ENCODE measurements at regions of chr3 and their contacts with region 1.

Region 1: DNA sequence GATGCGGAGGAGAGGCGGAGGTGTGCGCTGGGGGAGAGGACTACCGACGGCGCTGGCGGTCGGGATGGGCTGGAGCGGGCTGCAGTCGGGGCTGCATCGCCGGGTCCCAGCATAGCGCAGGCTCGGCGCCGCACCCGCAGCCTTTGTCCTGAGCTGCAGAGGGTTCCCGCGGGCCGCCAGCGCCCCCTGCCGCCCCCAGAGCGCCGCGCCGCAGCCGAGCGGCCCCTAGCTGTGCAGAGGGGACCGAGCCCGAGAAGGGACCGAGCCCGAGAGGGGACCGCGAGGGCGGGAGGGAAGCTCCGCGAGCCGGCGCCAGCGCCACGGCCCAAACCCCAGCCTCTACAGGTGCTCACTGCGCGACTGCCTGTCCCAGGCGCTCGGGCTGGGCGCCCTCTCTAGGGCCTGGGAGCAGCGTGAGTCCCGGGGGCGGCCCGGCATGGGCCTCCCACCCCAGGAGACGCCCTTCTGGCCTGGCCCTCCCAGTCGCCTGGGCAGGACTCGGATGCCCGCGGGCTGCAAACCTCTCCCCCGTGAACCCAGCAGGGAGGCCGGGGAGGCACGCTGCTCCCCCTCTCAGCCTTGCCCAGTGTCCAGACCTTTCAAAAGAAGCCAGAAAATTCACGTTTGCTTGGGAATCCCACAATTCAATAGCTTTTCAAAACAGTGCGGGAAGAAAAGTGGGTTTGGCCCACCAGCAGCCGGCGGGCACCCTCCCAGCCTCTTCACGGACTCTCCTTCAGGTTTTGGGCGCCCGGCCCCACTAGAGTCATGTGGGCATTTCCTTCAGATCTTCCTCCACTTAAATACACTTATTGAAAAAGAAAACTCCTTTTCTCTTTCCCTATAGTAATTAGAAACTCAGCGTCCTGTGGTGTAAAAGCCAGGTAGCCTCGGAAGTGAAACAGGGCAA is 134.7 kb downstream of the TPRA1 start:
- H3K4me3 Mint-ChIP-seq: no peak overlapping the region
- H3K27ac Mint-ChIP-seq: no peak overlapping the region
- H3K4me1 Mint-ChIP-seq: peaks cover 18% of the 10 kb centered on the region
- H3K27me3 Mint-ChIP-seq: peaks cover 71% of the 10 kb centered on the region

Region 2: GRCh38 chr3:126752303-126752842 is 703.4 kb before region 1 on chr3:
- intact Hi-C with region 1: loop called (anchors 2 kb)
- H3K4me3 Mint-ChIP-seq: no peak overlapping the region
- H3K27ac Mint-ChIP-seq: no peak overlapping the region
- H3K4me1 Mint-ChIP-seq: no peaks in the 10 kb centered on the region
- H3K27me3 Mint-ChIP-seq: no peaks in the 10 kb centered on the region

Region 3: GRCh38 chr3:127196466-127197299 is 259.1 kb before region 1 on chr3:
- intact Hi-C with region 1: no loop called
- H3K4me3 Mint-ChIP-seq: no peak overlapping the region
- H3K27ac Mint-ChIP-seq: no peak overlapping the region
- H3K4me1 Mint-ChIP-seq: peaks cover 11% of the 10 kb centered on the region
- H3K27me3 Mint-ChIP-seq: peaks cover 17% of the 10 kb centered on the region

Region 4: GRCh38 chr3:127254730-127255129 is 201.1 kb before region 1 on chr3:
- intact Hi-C with region 1: loop called (anchors 5 kb)
- H3K4me3 Mint-ChIP-seq: no peak overlapping the region
- H3K27ac Mint-ChIP-seq: no peak overlapping the region
- H3K4me1 Mint-ChIP-seq: peaks cover 28% of the 10 kb centered on the region
- H3K27me3 Mint-ChIP-seq: peaks cover 12% of the 10 kb centered on the region

Region 5: GRCh38 chr3:127525373-127525772 is 69.6 kb after region 1 on chr3:
- intact Hi-C with region 1: no loop called
- H3K4me3 Mint-ChIP-seq: no peak overlapping the region
- H3K27ac Mint-ChIP-seq: no peak overlapping the region
- H3K4me1 Mint-ChIP-seq: no peaks in the 10 kb centered on the region
- H3K27me3 Mint-ChIP-seq: peaks cover 39% of the 10 kb centered on the region

Measured in dendritic cell treated with granulocyte-macrophage colony-stimulating factor and Interleukin-4, amounts not matched to agents 40 ng/mL and 50 ng/mL, for 4 days (primary cell).